ENCODE measurements at regions of chr4 and their contacts with region 1.

Region 1: GRCh38 chr4:154559494-154560418 is 3.1 kb upstream of the FGB start:
- DNase-seq: no peak
- ATAC-seq: peak; percentile 95
- H3K4me3 ChIP-seq: no peak overlapping the region
- H3K27ac ChIP-seq: no peak overlapping the region
- H3K4me1 ChIP-seq: no peaks in the 10 kb centered on the region
- H3K27me3 ChIP-seq: no peaks in the 10 kb centered on the region
- CTCF ChIP-seq: peak; percentile 48 to 83 (median 53)
- EP300 ChIP-seq: no peak
- POLR2A ChIP-seq: no peak
- RAD21 ChIP-seq: peak; percentile 90

Region 2: DNA sequence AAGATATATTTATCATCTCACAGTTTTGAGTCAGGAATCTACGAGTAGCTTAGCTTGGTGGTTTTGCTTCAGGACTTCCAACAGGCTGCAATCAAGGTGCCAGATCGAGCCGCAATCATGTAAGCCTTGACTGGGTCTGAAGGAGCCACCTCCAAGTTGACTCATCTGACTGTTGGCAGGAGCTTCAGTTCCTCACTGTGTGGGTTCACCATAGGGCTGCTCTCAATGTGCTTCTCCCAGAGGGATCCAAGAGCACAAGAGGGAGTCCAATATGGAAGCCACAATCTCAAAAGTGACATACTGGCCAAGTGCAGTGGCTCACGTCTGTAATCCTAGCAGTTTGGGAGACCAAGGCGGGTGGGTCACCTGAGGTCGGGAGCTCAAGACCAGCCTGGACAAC is 94.7 kb before region 1 on chr4:
- CTCF ChIA-PET with region 1: no interaction called
- POLR2A ChIA-PET with region 1: no interaction called
- RAD21 ChIA-PET with region 1: no interaction called
- SMC1A ChIA-PET with region 1: no interaction called
- in situ Hi-C with region 1: no loop called
- intact Hi-C with region 1: no loop called
- DNase-seq: no peak
- ATAC-seq: no peak
- H3K4me3 ChIP-seq: no peak overlapping the region
- H3K27ac ChIP-seq: no peak overlapping the region
- H3K4me1 ChIP-seq: no peaks in the 10 kb centered on the region
- H3K27me3 ChIP-seq: no peaks in the 10 kb centered on the region; a peak in 1 of 4 replicates
- CTCF ChIP-seq: no peak
- EP300 ChIP-seq: no peak
- POLR2A ChIP-seq: no peak
- RAD21 ChIP-seq: no peak

Region 3: DNA sequence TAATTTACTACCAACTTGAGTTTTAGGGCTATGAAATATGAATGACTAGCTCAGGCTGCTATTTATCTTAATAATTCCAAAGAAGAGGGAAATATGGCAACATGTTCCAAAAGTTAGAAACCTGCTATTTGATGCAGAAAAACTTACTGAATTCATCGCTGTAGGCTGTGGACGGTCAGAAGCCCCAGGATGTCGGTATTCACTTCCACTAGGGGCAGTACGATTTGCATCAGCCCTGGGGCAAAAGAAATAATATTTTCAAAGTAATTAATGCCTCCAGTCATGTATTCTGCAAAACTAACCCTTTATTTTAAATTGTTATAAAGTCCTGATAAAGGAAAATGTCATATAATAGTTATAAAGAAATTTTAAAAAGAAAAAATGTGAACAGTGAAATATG is 14.1 kb before region 1 on chr4:
- CTCF ChIA-PET with region 1: interaction called, 37 read pairs
- POLR2A ChIA-PET with region 1: interaction called, 5 read pairs
- RAD21 ChIA-PET with region 1: interaction called, 11 read pairs
- SMC1A ChIA-PET with region 1: interaction called, 10 read pairs
- in situ Hi-C with region 1: no loop called
- intact Hi-C with region 1: no loop called
- DNase-seq: no peak
- ATAC-seq: no peak
- H3K4me3 ChIP-seq: no peak overlapping the region
- H3K27ac ChIP-seq: no peak overlapping the region
- H3K4me1 ChIP-seq: peaks cover 3% of the 10 kb centered on the region; the same call in 1 of the 2 replicates
- H3K27me3 ChIP-seq: no peaks in the 10 kb centered on the region
- CTCF ChIP-seq: peak in 1 of 3 experiments; percentile 6; a peak in 1 of 6 replicates
- EP300 ChIP-seq: no peak
- POLR2A ChIP-seq: no peak
- RAD21 ChIP-seq: no peak

Region 4: DNA sequence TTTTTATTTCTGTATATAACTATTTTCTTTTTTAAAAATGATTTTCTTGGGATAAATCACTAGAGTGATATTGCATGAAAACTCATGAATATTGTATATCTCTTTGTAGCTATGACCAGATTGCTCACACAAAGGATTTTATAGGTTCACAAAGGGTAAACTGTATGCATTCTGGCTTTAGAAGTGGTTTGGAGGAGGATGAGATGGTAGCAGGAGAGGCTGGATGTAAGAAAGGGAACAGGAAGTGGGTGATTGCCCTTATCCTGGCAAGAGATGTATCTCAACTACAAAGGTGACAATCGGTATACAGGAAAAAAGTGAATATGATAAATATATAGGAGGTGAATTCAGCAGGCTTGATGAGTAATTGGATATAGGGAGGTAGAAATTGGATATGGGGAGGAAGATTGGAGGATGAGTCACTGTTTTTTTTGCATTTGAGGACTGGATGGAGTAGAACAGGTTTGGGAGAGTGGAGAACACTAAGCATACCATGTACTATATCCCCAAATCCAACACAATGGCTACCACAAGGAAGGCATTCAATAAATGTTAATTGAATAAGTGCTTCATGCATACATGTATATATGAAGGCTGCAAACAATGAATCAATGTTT is 42.8 kb after region 1 on chr4:
- CTCF ChIA-PET with region 1: interaction called, 10 read pairs
- POLR2A ChIA-PET with region 1: no interaction called
- RAD21 ChIA-PET with region 1: no interaction called
- SMC1A ChIA-PET with region 1: interaction called, 4 read pairs
- in situ Hi-C with region 1: no loop called
- intact Hi-C with region 1: no loop called
- DNase-seq: no peak
- ATAC-seq: no peak
- H3K4me3 ChIP-seq: no peak overlapping the region
- H3K27ac ChIP-seq: no peak overlapping the region
- H3K4me1 ChIP-seq: no peaks in the 10 kb centered on the region
- H3K27me3 ChIP-seq: no peaks in the 10 kb centered on the region
- CTCF ChIP-seq: no peak
- EP300 ChIP-seq: no peak
- POLR2A ChIP-seq: no peak
- RAD21 ChIP-seq: no peak

Region 5: GRCh38 chr4:154626793-154627484 is 67.2 kb after region 1 on chr4:
- CTCF ChIA-PET with region 1: interaction called, 796 read pairs
- POLR2A ChIA-PET with region 1: no interaction called
- RAD21 ChIA-PET with region 1: interaction called, 88 read pairs
- SMC1A ChIA-PET with region 1: interaction called, 112 read pairs
- in situ Hi-C with region 1: no loop called
- intact Hi-C with region 1: loop called (anchors 1 kb)
- DNase-seq: no peak
- ATAC-seq: peak; percentile 98
- H3K4me3 ChIP-seq: no peak overlapping the region
- H3K27ac ChIP-seq: no peak overlapping the region
- H3K4me1 ChIP-seq: no peaks in the 10 kb centered on the region
- H3K27me3 ChIP-seq: peaks cover 3% of the 10 kb centered on the region in 2 experiments
- CTCF ChIP-seq: peak; percentile 52 to 75 (median 64)
- EP300 ChIP-seq: no peak
- POLR2A ChIP-seq: no peak
- RAD21 ChIP-seq: peak; percentile 13; the same call in 1 of the 2 replicates

Region 6: GRCh38 chr4:154982187-154983047 is 422.7 kb after region 1 on chr4:
- CTCF ChIA-PET with region 1: no interaction called
- POLR2A ChIA-PET with region 1: no interaction called
- RAD21 ChIA-PET with region 1: no interaction called
- SMC1A ChIA-PET with region 1: no interaction called
- in situ Hi-C with region 1: no loop called
- intact Hi-C with region 1: no loop called
- DNase-seq: peak; percentile 15
- ATAC-seq: peak; percentile 86
- H3K4me3 ChIP-seq: no peak overlapping the region
- H3K27ac ChIP-seq: no peak overlapping the region
- H3K4me1 ChIP-seq: no peaks in the 10 kb centered on the region
- H3K27me3 ChIP-seq: no peaks in the 10 kb centered on the region
- CTCF ChIP-seq: peak; percentile 72 to 73 (median 72)
- EP300 ChIP-seq: no peak
- POLR2A ChIP-seq: no peak
- RAD21 ChIP-seq: peak; percentile 71

Measured in GM12878 (cell line).